Right ventricle myocardium inferior (tissue), 1 donor: ENCODE measurements at regions of chr2 and their contacts with region 1.

Region 1: GRCh38 chr2:134118279-134119116 is 135.4 kb upstream of the MGAT5 start:
- DNase-seq: no peak
- ATAC-seq: peak; percentile 53

Region 2: DNA sequence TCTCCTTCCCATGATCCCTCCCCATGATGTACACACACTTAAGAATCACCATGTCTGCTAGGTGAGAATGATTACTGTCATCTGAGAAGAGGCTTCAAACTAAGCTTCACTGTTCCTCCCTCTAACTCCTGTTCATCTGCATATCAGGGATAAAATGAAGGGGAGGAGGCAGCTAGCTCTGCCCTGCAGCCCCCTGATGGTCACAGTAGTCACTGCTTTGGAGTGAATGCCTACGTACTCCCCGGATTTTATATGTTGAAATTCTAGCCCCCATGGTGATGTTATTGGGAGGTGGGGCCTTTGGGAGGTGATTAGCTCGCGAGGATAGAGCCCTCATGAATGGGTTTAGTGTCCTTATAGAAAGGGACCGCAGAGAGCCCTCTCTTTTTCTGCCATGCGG is 706.6 kb before region 1 on chr2:
- intact Hi-C with region 1: no loop called
- DNase-seq: no peak
- ATAC-seq: no peak

Region 3: DNA sequence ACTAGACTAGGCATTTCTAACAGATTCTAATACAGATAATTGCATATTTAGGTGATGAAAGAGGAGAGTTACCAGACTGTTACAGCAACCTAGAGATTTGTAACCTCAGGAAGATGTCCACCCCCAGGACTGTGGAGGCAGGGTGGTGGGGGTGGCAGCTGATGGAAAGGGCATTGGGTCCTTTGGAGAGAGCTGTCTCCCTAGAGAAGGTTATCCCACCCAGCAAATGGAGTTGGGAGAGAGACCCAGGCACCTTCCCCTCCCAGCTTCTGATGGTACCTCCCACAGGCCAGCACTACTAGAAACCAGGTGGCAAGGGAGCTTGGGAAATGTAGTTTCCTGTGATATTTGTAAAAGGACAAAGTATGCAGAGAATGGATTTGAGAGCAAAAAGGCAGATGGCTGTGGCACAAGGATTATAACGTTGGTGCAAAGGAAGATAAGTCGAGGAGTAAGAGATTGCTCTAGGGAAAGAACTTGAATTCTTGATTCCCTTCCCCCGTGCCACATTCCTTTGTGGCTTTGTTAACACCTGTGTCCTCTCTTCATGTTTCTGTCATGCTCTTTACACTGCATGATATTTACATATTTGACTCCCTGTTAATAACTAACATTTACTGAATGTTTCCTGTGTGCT is 59.9 kb after region 1 on chr2:
- intact Hi-C with region 1: loop called (anchors 2 kb)
- DNase-seq: no peak
- ATAC-seq: no peak

Region 4: DNA sequence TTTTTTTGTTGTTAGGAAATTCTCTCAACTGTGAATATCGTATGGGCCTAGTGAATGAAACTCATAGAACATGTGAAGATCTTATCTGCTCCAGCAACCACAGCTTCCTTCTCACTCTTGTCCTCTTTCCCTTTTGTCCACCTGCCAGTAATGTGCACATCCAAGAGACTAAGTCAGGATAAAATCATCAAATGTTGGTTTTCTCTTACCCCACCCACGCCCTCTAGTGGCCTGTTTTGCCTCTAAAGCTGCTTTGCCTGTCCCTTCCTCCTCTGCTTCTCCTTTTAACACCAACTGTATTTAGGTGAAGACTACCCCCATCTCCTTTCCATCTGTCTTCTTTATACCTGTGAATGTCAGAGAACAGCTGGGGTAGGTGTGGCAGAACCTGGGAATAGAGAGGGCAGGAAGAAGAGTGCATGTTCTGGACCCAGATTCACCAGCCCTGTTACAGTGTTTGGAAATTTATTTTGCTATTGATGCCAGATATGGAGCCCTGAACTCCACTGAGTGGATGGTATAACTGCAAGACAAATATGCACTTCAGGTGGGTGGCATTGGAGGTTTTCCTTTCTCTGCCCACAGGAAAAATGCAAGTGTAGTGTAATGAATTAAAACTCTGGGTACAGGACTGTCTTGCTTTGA is 127.0 kb after region 1 on chr2:
- intact Hi-C with region 1: loop called (anchors 2 kb)
- DNase-seq: peak; percentile 79
- ATAC-seq: peak; percentile 43

Region 5: GRCh38 chr2:134368009-134368817 is 249.7 kb after region 1 on chr2:
- intact Hi-C with region 1: loop called (anchors 2 kb)
- DNase-seq: peak; percentile 50
- ATAC-seq: peak; percentile 31

Region 6: DNA sequence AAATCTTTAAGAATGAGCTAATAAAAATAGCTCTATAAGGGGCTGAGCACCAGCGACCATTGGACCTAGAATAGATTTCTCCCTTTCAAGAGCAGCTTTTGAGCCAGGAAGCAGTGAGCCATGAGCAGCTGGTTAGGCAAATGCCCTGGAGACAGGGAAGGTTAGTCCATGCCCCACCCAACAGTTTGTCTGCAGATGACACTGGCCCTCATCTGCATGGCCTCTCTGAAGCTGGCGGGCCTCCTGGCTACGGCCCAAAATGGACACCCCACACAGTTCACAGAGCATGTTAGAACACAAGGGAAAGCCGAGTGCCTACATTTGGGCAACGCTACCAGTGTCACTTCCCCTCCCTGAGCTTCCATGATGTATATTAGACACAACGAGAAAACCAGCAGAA is 336.4 kb after region 1 on chr2:
- intact Hi-C with region 1: loop called (anchors 2 kb)
- DNase-seq: no peak
- ATAC-seq: no peak